ENCODE measurements at regions of chr16 and their contacts with region 1.

Region 1: DNA sequence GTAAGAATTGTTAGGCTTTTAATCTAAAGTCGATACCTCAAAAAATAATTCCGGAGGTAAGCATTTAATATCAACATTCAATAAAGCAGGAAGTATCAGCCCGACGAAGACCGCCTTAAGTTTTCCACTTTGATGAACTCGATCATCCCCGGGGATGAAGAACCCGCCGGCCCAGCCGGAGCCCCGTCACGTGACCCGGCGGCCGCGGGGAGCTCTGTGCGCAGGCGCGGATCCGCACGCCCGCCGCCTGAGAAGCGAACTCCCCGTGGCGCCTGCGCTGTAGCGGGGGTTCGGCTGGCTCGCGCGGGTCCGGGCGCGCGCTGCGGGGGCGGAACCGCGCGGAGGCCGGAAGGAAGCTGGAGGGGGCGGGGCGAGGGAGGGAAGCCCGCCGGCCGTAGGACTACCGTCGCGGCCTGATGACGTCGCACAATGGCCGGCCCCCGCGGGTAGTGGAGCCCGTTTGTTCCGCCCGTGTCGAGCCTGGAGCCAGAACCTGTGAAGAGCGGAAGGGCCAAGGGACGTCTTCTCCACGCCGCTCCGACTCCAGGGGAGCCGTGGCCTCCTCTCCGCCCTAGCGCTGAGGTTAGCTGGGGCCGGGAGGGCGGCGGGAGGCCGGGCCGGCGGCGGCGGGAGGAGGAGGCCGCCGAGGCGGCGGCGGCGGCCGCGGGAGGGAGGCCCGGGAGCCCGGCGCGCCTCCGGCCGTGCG is at the start of gene ZC3H18:
- DNase-seq: peak; percentile 92 to 100 (median 96)
- ATAC-seq: peak; percentile 89 to 93 (median 92)
- H3K4me3 ChIP-seq: peak within 1 kb of the TSS; percentile 69 to 92
- H3K4me3 Mint-ChIP-seq: peak within 1 kb of the TSS; percentile 80 to 84 (median 82)
- H3K27ac ChIP-seq: peak within 1 kb of the TSS; percentile 64
- H3K27ac Mint-ChIP-seq: peak within 1 kb of the TSS; percentile 78 to 88
- H3K4me1 ChIP-seq: peaks cover 9 to 31% of the 10 kb centered on the region in 2 experiments
- H3K4me1 Mint-ChIP-seq: peaks cover 29 to 37% (median 36%) of the 10 kb centered on the region in 3 donors
- H3K27me3 ChIP-seq: no peaks in the 10 kb centered on the region
- H3K27me3 Mint-ChIP-seq: no peaks in the 10 kb centered on the region
- total RNA-seq, gene ZC3H18: 87.0 to 111 (median 91.5) TPM

Region 2: GRCh38 chr16:88597856-88598491 is 27.8 kb after region 1 on chr16:
- CTCF ChIA-PET with region 1: no interaction called
- POLR2A ChIA-PET with region 1: interaction called in 1 of 2 experiments, 16 read pairs
- DNase-seq: no peak
- ATAC-seq: no peak
- H3K4me3 ChIP-seq: no peak overlapping the region
- H3K4me3 Mint-ChIP-seq: no peak overlapping the region
- H3K27ac ChIP-seq: no peak overlapping the region
- H3K27ac Mint-ChIP-seq: no peak overlapping the region
- H3K4me1 ChIP-seq: no peaks in the 10 kb centered on the region
- H3K4me1 Mint-ChIP-seq: peaks cover 5 to 9% (median 8%) of the 10 kb centered on the region in 3 donors
- H3K27me3 ChIP-seq: no peaks in the 10 kb centered on the region
- H3K27me3 Mint-ChIP-seq: no peaks in the 10 kb centered on the region